RWPE1 (cell line): ENCODE measurements at regions of chr17 and their contacts with region 1.

Region 1: DNA sequence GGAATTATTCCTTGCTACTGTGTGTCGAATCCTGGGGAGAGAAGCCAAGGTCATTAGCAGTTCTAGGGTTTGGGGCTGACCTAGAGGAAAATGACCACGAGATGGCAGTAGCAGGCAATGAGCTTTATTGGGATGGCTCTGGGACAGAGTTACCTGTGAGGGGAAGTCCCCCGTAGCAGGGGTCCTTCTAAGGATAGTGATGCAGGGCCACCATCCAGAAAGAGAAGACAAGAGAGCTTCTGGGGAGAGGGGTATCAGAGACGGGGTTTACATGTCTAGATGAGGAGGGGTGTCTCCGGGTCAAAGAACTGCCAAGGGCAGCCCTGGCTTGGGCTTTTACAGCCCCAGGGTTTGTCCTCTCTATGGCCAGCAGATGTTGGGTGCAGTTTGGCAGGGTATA is 6.4 kb upstream of the GGT6 start:
- DNase-seq: peak; percentile 75
- H3K27ac ChIP-seq: no peak overlapping the region
- CTCF ChIP-seq: peak; percentile 75

Region 2: DNA sequence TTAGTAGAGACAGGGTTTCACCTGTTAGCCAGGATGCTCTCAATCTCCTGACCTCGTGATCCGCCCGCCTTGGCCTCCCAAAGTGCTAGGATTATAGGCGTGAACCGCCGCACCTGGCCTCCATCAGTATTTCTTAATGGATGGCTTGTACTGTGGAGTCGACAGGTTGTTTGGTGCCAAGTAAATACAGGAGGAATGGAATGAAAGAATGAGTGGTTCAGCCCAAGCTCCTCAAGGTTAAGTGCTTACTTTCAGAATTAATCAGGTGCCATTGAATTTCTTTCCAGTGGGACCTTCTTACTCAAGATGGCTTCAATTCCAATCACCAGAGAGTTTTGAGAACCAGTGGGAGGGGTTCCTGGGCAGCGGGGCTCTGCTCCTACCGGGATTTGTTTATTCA is 49.7 kb after region 1 on chr17:
- CTCF ChIA-PET with region 1: interaction called, 10 read pairs
- POLR2A ChIA-PET with region 1: no interaction called
- DNase-seq: no peak
- H3K27ac ChIP-seq: no peak overlapping the region
- CTCF ChIP-seq: no peak

Region 3: DNA sequence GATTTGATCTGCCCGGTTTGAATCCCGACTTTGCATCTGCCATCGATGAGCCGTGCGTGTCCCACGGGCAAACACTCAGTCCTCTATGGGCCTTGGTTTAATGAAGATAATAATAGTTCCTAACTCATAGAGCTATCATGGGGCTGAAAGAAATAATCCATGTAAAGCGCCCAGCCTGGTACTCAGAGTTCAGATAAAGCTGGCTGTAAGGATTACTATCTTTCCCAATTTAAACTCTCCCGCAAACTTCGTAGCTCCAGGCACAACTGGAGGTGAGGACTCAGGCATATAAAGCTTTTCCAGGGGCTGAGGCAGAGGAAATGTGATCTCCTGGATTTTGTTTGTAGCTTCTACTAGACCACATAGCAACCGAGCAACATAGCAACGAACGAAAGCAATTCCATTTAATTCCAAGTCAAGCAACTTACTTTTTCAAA is 58.4 kb after region 1 on chr17:
- CTCF ChIA-PET with region 1: interaction called, 14 read pairs
- POLR2A ChIA-PET with region 1: no interaction called
- DNase-seq: no peak
- H3K27ac ChIP-seq: no peak overlapping the region
- CTCF ChIP-seq: no peak